ENCODE measurements at regions of chr12 and their contacts with region 1.

Region 1: DNA sequence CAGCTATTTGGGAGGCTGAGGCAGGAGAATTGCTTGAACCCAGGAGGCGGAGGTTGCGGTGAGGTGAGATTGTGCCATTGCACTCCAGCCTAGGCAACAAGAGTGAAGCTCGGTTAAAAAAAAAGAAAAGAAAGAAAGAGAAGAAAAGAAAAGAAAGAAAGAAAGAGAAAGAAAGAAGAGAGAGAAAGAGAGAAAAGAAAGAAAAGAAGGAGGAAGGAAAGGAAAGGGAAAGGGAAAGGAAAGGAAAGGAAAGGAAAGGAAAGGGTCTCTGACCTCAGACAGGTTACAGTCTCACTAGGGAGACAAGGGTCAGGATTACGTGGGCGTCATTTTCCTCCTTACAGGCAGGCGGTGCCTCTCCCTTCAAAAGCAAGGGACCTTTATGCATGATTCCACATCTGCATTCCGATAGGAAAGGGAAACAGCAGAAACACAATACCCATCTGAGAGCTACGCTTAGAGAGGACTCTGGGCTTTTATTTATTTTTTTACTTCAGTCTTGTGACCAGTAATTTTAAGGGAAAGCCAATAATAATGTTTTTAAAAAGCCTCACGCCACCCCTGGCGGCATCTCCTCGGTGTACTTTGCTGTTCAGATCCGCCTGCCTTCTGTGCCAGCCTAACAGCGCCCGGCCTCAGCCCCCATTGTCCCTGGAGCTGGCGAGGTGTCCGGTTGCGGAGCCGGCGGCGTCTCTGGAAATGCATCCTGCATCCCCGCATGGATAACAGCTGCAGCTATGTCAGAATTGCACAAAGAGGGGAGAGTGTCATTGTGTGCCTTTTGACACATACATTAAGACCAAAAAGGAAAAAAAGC is 945 bp upstream of the HIP1R start:
- DNase-seq: no peak
- ATAC-seq: peak; percentile 70
- H3K4me3 ChIP-seq: peak overlapping the region; percentile 50 to 70
- H3K27ac ChIP-seq: peak overlapping the region; percentile 40
- H3K4me1 ChIP-seq: peaks cover 12% of the 10 kb centered on the region
- H3K27me3 ChIP-seq: no peaks in the 10 kb centered on the region
- CTCF ChIP-seq: no peak; the same call in 1 of the 2 replicates

Region 2: DNA sequence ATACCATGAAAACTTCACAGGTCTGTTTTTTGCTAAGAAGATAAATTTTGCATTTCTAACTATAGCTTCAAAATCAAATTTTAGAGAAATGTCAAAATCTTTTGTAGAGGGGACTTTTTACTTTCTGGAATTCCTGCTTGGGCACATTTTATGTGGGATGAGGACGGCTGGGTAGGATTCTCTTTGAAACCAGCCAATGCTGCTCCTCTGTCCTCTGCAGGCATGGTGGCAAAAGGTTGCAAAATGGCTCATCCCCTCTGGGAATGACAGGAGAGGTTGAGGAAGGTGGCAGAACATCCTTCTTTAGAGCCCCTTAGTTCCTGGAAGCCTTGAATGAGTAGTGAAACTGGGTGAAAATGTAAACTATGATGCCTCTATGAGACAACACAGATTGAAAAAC is 66.6 kb before region 1 on chr12:
- CTCF ChIA-PET with region 1: interaction called, 16 read pairs
- POLR2A ChIA-PET with region 1: no interaction called
- in situ Hi-C with region 1: no loop called
- intact Hi-C with region 1: no loop called
- DNase-seq: no peak
- ATAC-seq: no peak
- H3K4me3 ChIP-seq: no peak overlapping the region
- H3K27ac ChIP-seq: no peak overlapping the region
- H3K4me1 ChIP-seq: no peaks in the 10 kb centered on the region
- H3K27me3 ChIP-seq: no peaks in the 10 kb centered on the region
- CTCF ChIP-seq: no peak

Region 3: DNA sequence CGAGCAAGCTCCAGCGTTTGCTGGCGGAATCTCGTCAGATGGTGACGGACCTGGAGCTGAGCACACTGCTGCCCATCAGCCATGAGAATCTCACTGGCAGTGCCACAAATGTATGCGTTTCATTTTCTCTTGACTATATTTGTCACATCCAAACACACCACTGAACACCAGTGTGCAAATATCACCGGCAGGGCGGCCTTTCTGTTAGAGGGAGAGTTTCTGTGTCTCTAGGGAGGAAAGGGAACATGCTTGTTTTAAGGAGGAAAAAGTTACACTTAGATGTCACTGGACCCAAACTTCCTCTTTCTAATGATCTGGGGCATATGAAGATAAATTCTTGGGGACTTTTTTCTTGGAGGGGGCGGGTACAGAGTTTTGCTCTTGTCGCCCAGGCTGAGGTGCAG is 21.0 kb before region 1 on chr12:
- CTCF ChIA-PET with region 1: no interaction called
- POLR2A ChIA-PET with region 1: no interaction called
- in situ Hi-C with region 1: no loop called
- intact Hi-C with region 1: no loop called
- DNase-seq: no peak
- ATAC-seq: no peak
- H3K4me3 ChIP-seq: no peak overlapping the region
- H3K27ac ChIP-seq: no peak overlapping the region
- H3K4me1 ChIP-seq: no peaks in the 10 kb centered on the region
- H3K27me3 ChIP-seq: no peaks in the 10 kb centered on the region
- CTCF ChIP-seq: no peak